B cell (primary cell): ENCODE measurements at regions of chr1 and their contacts with region 1.

Region 1: GRCh38 chr1:200620273-200621131 is at the start of gene KIF14:
- DNase-seq: peak; percentile 93
- ATAC-seq: peak; percentile 97
- H3K4me3 ChIP-seq: peak within 1 kb of the TSS; percentile 68 to 98 (median 72)
- H3K4me3 Mint-ChIP-seq: peak within 1 kb of the TSS; percentile 94
- H3K27ac ChIP-seq: peak within 1 kb of the TSS; percentile 64 to 77
- H3K27ac Mint-ChIP-seq: peak within 1 kb of the TSS; percentile 90
- H3K4me1 ChIP-seq: peaks cover 5 to 15% of the 10 kb centered on the region in 2 donors
- H3K4me1 Mint-ChIP-seq: peaks cover 9% of the 10 kb centered on the region
- H3K27me3 ChIP-seq: no peaks in the 10 kb centered on the region
- H3K27me3 Mint-ChIP-seq: no peaks in the 10 kb centered on the region
- CTCF ChIP-seq: no peak
- total RNA-seq, gene KIF14: 0.05 and 0.15 TPM in 2 replicates

Region 2: GRCh38 chr1:200302192-200302920 is 318.1 kb before region 1 on chr1:
- CTCF ChIA-PET with region 1: no interaction called
- POLR2A ChIA-PET with region 1: no interaction called
- intact Hi-C with region 1: loop called (anchors 2 kb)
- DNase-seq: peak; percentile 82
- ATAC-seq: peak; percentile 79
- H3K4me3 ChIP-seq: peak overlapping the region; percentile 60 to 96 (median 88)
- H3K4me3 Mint-ChIP-seq: peak overlapping the region; percentile 93
- H3K27ac ChIP-seq: peak overlapping the region; percentile 60 to 61
- H3K27ac Mint-ChIP-seq: peak overlapping the region; percentile 89
- H3K4me1 ChIP-seq: peaks cover 44 to 47% of the 10 kb centered on the region in 2 donors
- H3K4me1 Mint-ChIP-seq: peaks cover 40% of the 10 kb centered on the region
- H3K27me3 ChIP-seq: no peaks in the 10 kb centered on the region
- H3K27me3 Mint-ChIP-seq: no peaks in the 10 kb centered on the region
- CTCF ChIP-seq: peak; percentile 35

Region 3: DNA sequence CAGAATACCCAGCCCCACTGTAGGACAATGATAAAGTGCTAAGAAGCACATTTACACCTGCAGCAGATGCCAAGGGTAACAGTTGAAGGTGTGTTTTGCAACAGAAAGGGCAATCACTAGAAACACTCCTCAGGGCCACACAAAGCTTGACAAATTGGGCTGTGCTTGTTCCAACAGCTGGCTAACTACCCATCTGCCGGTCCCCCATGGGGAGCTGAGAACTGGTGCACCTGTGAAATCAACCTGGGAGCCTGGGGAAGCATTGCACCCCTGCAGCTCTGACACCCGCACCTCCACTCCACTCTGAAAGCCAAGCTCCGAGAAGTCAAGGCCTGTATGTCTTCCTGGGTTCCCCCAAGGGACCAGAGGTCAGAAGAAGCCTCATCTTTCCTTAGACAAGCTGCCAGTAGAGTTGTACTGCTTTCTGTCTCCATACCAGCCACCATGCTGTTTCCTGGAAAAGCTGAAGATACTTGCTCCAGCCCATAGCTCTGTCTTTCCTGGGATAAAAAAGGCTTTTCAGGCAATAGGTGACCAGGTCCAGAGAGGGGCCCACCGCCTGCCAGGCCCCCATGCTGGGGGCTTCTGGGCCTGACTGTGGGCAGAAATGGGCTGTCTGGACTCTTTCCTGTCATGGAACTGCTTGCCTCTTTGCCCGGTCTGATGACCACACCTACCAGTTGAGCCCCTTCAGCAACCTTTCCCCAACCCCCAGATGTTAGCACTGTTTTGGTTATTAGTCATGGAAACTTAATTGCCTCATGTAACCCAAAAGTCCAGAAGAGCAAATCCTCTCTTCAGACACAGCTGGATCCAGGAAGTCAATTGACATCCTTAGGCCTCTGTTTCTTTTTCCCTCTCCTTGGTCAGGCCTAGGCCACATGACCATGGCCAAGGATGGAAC is 93.5 kb before region 1 on chr1:
- CTCF ChIA-PET with region 1: no interaction called
- POLR2A ChIA-PET with region 1: no interaction called
- intact Hi-C with region 1: no loop called
- DNase-seq: no peak
- ATAC-seq: peak; percentile 33
- H3K4me3 ChIP-seq: no peak overlapping the region
- H3K4me3 Mint-ChIP-seq: no peak overlapping the region
- H3K27ac ChIP-seq: no peak overlapping the region
- H3K27ac Mint-ChIP-seq: no peak overlapping the region
- H3K4me1 ChIP-seq: peaks cover 3 to 7% of the 10 kb centered on the region in 2 donors
- H3K4me1 Mint-ChIP-seq: peaks cover 15% of the 10 kb centered on the region
- H3K27me3 ChIP-seq: peaks cover 0 to 2% (median 0%) of the 10 kb centered on the region in 4 experiments
- H3K27me3 Mint-ChIP-seq: no peaks in the 10 kb centered on the region
- CTCF ChIP-seq: no peak

Region 4: DNA sequence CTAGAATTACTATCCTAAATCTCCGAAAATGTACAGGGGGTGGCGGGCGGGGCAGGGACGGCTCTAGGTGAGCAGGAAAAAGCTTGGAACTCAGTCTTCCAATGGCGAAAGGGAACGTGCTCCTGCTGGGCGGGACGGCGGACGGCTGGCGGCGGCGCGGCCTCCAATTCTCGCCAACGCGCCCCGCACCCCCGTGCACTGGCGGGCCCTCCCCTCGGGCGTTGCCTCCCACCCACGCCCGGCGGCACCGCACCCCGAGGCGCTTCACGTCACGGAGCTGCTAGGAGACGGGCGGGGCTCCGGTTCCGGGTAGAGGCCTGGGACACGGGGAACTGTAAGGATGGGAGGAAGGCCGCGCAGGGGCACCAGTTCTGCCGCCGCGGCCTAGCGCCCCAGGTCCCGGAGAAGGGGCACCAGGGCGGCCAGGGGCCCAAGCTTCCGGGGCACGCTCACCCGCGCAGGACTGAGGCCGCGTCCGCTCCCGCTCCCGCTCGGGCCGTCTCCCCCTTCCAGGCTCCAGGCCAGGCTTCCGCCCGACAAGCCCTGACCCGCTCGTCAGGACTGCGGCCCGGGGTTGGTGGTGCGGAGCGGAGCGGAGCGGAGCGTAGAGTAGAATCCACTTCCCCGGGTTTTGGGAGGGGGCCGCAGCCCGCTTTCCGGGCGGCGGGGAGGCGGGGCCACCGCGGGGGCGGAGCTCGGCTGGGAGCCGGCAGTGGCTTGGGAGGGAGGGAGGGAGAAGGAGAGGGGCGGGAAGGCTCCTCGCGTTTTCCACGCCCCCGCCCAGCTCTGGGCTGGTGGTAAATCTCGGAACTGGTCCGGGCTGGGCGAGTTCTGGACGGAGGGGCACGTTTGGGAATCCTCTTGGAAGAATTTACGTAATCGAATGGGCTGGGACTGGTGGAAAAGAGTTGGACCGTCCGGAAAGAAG is 49.1 kb after region 1 on chr1 and contains the start of gene DDX59:
- CTCF ChIA-PET with region 1: interaction called, 59 read pairs
- POLR2A ChIA-PET with region 1: interaction called, 11 read pairs
- intact Hi-C with region 1: loop called (anchors 1 kb)
- DNase-seq: peak; percentile 92
- ATAC-seq: peak; percentile 82
- H3K4me3 ChIP-seq: peak within 1 kb of the TSS; percentile 56 to 95 (median 78)
- H3K4me3 Mint-ChIP-seq: peak within 1 kb of the TSS; percentile 99
- H3K27ac ChIP-seq: peak within 1 kb of the TSS; percentile 92 to 98
- H3K27ac Mint-ChIP-seq: peak within 1 kb of the TSS; percentile 99
- H3K4me1 ChIP-seq: peaks cover 8 to 13% of the 10 kb centered on the region in 2 donors
- H3K4me1 Mint-ChIP-seq: peaks cover 42% of the 10 kb centered on the region
- H3K27me3 ChIP-seq: no peaks in the 10 kb centered on the region
- H3K27me3 Mint-ChIP-seq: no peaks in the 10 kb centered on the region
- CTCF ChIP-seq: no peak
- total RNA-seq, gene DDX59: 41.9 and 43.6 TPM in 2 replicates

Region 5: GRCh38 chr1:200774735-200775444 is 154.4 kb after region 1 on chr1:
- CTCF ChIA-PET with region 1: interaction called, 13 read pairs
- POLR2A ChIA-PET with region 1: no interaction called
- intact Hi-C with region 1: no loop called
- DNase-seq: no peak
- ATAC-seq: no peak
- H3K4me3 ChIP-seq: no peak overlapping the region
- H3K4me3 Mint-ChIP-seq: no peak overlapping the region
- H3K27ac ChIP-seq: no peak overlapping the region
- H3K27ac Mint-ChIP-seq: no peak overlapping the region
- H3K4me1 ChIP-seq: no peaks in the 10 kb centered on the region
- H3K4me1 Mint-ChIP-seq: peaks cover 2% of the 10 kb centered on the region
- H3K27me3 ChIP-seq: no peaks in the 10 kb centered on the region
- H3K27me3 Mint-ChIP-seq: no peaks in the 10 kb centered on the region
- CTCF ChIP-seq: no peak

Region 6: DNA sequence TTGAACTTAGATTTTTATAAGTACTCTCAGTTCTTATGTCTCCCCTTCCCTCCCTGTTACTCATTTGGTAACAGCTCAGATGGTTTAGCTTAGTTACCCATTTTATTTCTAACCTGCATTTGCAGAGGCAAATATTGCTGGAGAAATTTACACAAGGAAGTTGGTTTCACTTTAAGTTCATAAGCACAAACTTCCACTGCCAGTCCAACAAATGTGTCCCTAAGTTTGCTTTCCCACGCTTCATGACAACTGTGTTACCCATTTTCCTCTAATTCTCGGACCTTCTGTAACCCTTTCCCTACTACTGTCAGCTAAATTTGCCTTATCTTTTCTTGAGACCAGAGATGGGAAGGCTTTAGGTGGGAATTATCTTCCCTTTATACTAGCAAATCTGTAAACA is 188.3 kb after region 1 on chr1:
- CTCF ChIA-PET with region 1: interaction called, 168 read pairs
- POLR2A ChIA-PET with region 1: no interaction called
- intact Hi-C with region 1: no loop called
- DNase-seq: no peak
- ATAC-seq: no peak
- H3K4me3 ChIP-seq: no peak overlapping the region
- H3K4me3 Mint-ChIP-seq: no peak overlapping the region
- H3K27ac ChIP-seq: no peak overlapping the region
- H3K27ac Mint-ChIP-seq: no peak overlapping the region
- H3K4me1 ChIP-seq: no peaks in the 10 kb centered on the region
- H3K4me1 Mint-ChIP-seq: no peaks in the 10 kb centered on the region
- H3K27me3 ChIP-seq: no peaks in the 10 kb centered on the region
- H3K27me3 Mint-ChIP-seq: peaks cover 14% of the 10 kb centered on the region
- CTCF ChIP-seq: no peak

Region 7: GRCh38 chr1:200971955-200972711 is 351.6 kb after region 1 on chr1:
- CTCF ChIA-PET with region 1: interaction called, 18 read pairs
- POLR2A ChIA-PET with region 1: no interaction called
- intact Hi-C with region 1: no loop called
- DNase-seq: peak; percentile 69
- ATAC-seq: peak; percentile 49
- H3K4me3 ChIP-seq: no peak overlapping the region
- H3K4me3 Mint-ChIP-seq: no peak overlapping the region
- H3K27ac ChIP-seq: no peak overlapping the region
- H3K27ac Mint-ChIP-seq: no peak overlapping the region
- H3K4me1 ChIP-seq: no peaks in the 10 kb centered on the region
- H3K4me1 Mint-ChIP-seq: peaks cover 11% of the 10 kb centered on the region
- H3K27me3 ChIP-seq: no peaks in the 10 kb centered on the region
- H3K27me3 Mint-ChIP-seq: no peaks in the 10 kb centered on the region
- CTCF ChIP-seq: peak; percentile 99

Region 8: DNA sequence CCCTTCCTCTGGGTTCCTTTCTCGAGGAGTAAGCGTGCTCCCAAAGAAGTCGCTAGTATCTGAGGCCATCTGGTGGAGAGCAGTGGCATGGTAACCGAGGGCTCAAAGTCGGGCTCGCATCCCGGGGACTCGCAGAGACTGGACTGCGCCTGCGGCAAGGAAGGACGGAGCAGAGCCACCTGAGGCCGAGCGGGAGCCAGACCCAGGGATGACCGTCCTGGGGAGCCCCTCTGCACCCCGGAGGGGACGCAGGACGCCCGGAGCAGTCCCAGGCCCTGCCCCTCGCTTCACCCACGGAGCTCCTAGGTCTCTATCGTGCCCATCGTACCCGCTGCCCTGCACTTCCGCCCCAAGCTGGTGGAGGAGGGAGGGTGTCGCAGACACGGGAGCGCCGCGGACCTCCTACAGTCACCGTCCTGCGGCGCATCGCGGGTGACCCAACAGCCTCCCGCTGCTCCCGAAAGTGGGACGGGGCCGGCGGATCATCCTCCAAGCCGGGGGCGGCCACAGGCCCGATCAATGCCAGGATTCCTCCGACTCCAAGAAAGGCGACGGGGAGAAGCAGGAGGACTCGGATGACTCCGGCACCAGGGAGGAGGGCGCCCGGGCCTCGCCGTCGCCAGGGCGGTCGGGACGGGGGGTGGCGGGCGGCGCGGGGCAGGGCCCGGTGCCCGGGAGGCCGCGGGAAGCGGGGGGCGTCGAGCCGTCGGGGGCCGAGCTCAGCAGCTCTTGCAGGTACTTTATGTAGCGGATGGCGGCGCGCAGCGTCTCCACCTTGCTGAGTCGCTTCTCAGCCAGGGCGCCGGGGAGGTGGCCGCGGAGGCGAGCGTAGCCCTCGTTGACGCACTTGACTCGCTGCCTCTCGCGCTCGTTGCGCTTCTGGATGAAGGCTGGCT is 494.0 kb after region 1 on chr1:
- CTCF ChIA-PET with region 1: interaction called, 6 read pairs
- POLR2A ChIA-PET with region 1: no interaction called
- intact Hi-C with region 1: loop called (anchors 2 kb)
- DNase-seq: peak; percentile 78
- ATAC-seq: peak; percentile 88
- H3K4me3 ChIP-seq: peak overlapping the region; percentile 31 to 77 (median 58)
- H3K4me3 Mint-ChIP-seq: peak overlapping the region; percentile 87
- H3K27ac ChIP-seq: no peak overlapping the region
- H3K27ac Mint-ChIP-seq: no peak overlapping the region
- H3K4me1 ChIP-seq: peaks cover 4 to 13% of the 10 kb centered on the region in 2 donors
- H3K4me1 Mint-ChIP-seq: peaks cover 4% of the 10 kb centered on the region
- H3K27me3 ChIP-seq: peaks cover 0 to 32% (median 14%) of the 10 kb centered on the region in 4 experiments
- H3K27me3 Mint-ChIP-seq: peaks cover 29% of the 10 kb centered on the region
- CTCF ChIP-seq: peak; percentile 75